Prostate gland (tissue), 2 donors: ENCODE measurements at regions of chr1 and their contacts with region 1.

Region 1: GRCh38 chr1:154463512-154463990 is 38.5 kb upstream of the TDRD10 start:
- DNase-seq: no peak
- H3K4me3 ChIP-seq: no peak overlapping the region
- H3K27ac ChIP-seq: no peak overlapping the region
- H3K4me1 ChIP-seq: no peaks in the 10 kb centered on the region
- H3K27me3 ChIP-seq: no peaks in the 10 kb centered on the region
- CTCF ChIP-seq: no peak
- POLR2A ChIP-seq: no peak

Region 2: DNA sequence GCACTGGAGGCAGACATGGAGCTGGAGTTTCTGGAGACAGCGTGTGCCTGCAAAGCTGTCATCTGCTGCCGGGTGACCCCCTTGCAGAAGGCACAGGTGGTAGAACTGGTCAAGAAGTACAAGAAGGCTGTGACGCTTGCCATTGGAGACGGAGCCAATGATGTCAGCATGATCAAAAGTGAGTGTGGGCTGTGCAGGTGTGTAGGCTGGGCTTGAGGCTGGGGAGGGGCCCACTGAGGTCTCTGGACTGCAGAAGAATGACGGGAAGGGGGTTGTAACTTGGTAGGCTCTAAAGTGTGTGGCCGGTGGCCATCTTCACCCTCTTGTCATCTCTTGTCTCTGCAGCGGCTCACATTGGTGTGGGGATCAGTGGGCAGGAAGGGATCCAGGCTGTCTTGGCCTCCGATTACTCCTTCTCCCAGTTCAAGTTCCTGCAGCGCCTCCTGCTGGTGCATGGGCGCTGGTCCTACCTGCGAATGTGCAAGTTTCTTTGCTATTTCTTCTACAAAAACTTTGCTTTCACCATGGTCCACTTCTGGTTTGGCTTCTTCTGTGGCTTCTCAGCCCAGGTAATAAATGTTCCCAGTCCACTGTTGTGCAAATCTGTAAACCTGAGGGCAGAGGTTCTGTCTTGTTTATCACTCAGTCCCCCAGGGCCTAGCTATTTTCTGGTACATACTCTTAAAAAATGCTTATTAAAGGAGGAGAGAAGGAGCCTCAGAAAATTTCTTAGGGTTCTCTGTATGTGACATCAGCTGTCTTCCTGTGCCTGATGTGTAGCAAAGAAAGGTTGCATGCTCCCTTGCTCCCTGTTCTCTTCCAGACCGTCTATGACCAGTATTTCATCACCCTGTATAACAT is 118.3 kb before region 1 on chr1:
- intact Hi-C with region 1: loop called (anchors 10 kb)
- DNase-seq: no peak
- H3K4me3 ChIP-seq: no peak overlapping the region
- H3K27ac ChIP-seq: no peak overlapping the region
- H3K4me1 ChIP-seq: no peaks in the 10 kb centered on the region
- H3K27me3 ChIP-seq: no peaks in the 10 kb centered on the region
- CTCF ChIP-seq: peak in 3 of 4 experiments; percentile 45 to 55 (median 48)
- POLR2A ChIP-seq: no peak

Region 3: GRCh38 chr1:154404984-154405761 is 58.4 kb before region 1 on chr1 and contains the start of gene IL6R:
- intact Hi-C with region 1: loop called (anchors 2 kb)
- DNase-seq: peak; percentile 94
- H3K4me3 ChIP-seq: peak within 1 kb of the TSS; percentile 66 to 84
- H3K27ac ChIP-seq: peak within 1 kb of the TSS; percentile 97 to 98
- H3K4me1 ChIP-seq: no peaks in the 10 kb centered on the region
- H3K27me3 ChIP-seq: no peaks in the 10 kb centered on the region
- CTCF ChIP-seq: peak; percentile 30 to 88 (median 80)
- POLR2A ChIP-seq: peak; percentile 87
- total RNA-seq, gene IL6R: 70.1 to 80.7 TPM